Activated naive CD4-positive, alpha-beta T cell treated with anti-CD3 and anti-CD28 coated beads for 36 hours (primary cell): ENCODE measurements at regions of chrX and their contacts with region 1.

Region 1: GRCh38 chrX:121160987-121161386 is 113.6 kb downstream of the GLUD2 start:
- DNase-seq: no peak
- H3K4me3 Mint-ChIP-seq: peak overlapping the region; percentile 16
- H3K27ac Mint-ChIP-seq: peak overlapping the region; percentile 82
- H3K4me1 Mint-ChIP-seq: peaks cover 45% of the 10 kb centered on the region
- H3K27me3 Mint-ChIP-seq: no peaks in the 10 kb centered on the region

Region 2: GRCh38 chrX:120485638-120486520 is 675.1 kb before region 1 on chrX:
- CTCF ChIA-PET with region 1: no interaction called
- intact Hi-C with region 1: loop called (anchors 5 kb)
- DNase-seq: peak; percentile 63
- H3K4me3 Mint-ChIP-seq: peak overlapping the region; percentile 68
- H3K27ac Mint-ChIP-seq: peak overlapping the region; percentile 83
- H3K4me1 Mint-ChIP-seq: peaks cover 27% of the 10 kb centered on the region
- H3K27me3 Mint-ChIP-seq: no peaks in the 10 kb centered on the region

Region 3: DNA sequence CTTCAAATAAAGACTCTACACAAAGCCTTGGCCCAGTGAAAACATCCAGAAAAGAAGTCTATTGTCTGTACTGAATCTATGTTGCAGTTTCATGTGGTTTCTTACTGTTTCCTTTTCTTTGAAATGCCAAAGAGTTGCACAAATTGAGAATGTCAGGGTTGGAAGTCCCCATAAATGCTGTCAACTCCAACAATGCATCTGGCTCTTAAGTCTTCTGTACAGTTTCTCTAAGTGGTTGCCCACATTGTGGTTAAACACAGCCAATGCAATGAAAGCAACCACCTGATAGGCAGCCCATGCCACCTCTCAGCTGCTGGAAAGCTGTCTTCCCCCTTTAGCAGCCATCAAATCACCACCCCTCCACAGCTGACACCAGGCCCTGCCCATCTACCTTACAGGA is 463.9 kb before region 1 on chrX:
- CTCF ChIA-PET with region 1: no interaction called
- intact Hi-C with region 1: loop called (anchors 2 kb)
- DNase-seq: peak; percentile 69
- H3K4me3 Mint-ChIP-seq: no peak overlapping the region
- H3K27ac Mint-ChIP-seq: peak overlapping the region; percentile 83
- H3K4me1 Mint-ChIP-seq: peaks cover 27% of the 10 kb centered on the region
- H3K27me3 Mint-ChIP-seq: no peaks in the 10 kb centered on the region

Region 4: DNA sequence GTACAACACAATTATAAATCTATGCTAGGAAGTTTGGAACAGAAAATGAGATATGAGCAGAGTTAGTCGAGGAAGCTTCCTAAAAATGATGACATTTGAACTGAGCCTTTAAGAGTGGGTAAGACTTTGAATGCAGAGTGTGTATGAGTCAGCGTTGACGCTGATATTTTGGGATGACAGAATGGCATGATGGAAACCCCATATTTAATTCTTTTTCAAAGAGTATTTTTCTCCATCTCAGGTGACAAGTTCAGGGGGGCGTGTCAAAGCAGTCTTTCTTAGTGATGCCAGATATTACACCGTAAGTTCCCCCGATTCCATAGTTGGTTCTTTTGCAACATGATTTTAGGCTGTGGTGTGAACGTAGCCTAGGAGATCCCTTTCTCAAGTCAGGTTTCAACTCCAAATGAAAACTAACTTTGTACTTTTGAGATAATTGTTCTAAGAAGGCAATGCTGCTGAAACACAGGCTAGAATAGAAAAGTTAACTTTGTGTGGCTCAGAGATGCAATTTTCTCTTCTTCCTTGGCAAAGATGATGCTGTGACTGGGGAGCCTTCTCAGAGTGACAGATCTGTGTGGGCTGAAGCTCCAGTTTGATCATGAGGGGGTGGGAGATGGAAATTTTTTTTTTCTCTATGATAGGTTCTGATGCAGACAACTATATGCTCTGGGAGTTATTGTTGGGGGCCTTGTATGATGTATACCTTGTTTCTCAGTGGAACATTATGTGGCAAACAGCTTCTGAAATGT is 54.3 kb before region 1 on chrX:
- CTCF ChIA-PET with region 1: no interaction called
- intact Hi-C with region 1: loop called (anchors 2 kb)
- DNase-seq: peak; percentile 22
- H3K4me3 Mint-ChIP-seq: no peak overlapping the region
- H3K27ac Mint-ChIP-seq: no peak overlapping the region
- H3K4me1 Mint-ChIP-seq: no peaks in the 10 kb centered on the region
- H3K27me3 Mint-ChIP-seq: no peaks in the 10 kb centered on the region

Region 5: DNA sequence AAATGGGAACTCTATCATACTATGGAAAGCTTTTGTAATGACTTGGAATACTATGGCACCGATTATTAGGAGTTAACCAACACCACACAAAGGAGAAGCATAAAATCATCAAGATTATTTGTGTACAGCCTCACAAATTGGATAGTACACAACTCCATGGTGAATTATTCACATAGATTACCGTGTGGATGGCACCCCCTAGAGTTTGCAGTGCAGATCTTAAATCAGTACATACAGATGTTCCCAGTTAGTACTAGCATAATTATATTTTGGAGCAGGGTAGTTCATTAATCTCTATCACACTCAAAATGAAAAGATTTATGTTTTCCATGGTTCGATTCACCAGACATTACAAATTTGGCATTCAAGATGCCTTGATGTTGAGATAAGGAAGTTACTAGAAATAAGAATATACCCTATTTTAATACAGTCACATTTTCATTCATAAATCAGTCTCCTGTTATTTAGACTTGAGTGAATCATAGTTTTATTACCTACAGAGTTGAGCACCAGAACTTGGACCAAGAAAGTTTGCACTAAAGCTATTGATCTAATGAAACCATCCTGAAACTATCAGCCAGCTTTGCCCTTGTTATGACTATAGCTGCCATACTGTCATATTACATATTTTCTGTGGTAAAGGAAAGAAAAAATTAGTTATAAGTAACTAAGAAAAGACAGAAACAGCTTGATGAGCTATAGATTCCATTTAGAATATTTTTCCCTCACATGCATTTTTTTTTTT is 418.2 kb after region 1 on chrX:
- CTCF ChIA-PET with region 1: no interaction called
- intact Hi-C with region 1: loop called (anchors 1 kb)
- DNase-seq: peak; percentile 46
- H3K4me3 Mint-ChIP-seq: no peak overlapping the region
- H3K27ac Mint-ChIP-seq: no peak overlapping the region
- H3K4me1 Mint-ChIP-seq: peaks cover 13% of the 10 kb centered on the region
- H3K27me3 Mint-ChIP-seq: peaks cover under 1% of the 10 kb centered on the region